CD8-positive, alpha-beta T cell (primary cell): ENCODE measurements at regions of chr17 and their contacts with region 1.

Region 1: DNA sequence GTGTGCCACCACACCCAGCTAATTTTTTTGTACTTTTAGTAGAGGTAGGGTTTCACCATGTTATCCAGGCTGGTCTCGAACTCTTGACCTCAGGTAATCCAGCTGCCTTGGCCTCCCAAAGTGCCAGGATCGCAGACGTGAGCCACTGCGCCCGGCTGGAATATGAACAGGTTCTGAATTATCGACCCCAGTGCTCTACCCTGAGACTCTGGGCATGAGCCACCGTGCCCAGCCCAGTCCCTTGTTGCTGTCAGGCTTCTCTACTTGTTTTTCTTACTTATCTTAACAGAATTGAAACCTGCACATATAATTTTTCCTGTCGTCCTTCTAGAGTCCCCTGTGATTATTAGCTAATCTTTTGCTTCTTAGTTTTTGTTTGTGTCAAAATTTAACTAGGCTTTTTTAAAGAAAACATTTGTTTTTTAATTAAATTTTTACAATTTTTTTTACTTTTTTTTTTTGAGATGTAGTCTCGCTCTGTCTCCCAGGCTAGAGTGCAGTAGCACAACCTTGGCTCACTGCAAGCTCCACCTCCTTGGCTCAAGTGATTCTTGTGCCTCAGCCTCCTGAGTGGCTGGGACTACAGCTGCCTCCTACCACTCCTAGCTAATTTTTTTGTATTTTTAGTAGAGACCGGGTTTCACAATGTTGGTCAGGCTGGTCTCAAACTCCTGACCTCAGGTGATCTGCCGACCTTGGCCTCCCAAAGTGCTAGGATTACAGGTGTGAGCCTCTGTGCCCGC is 66.7 kb downstream of the AP2B1 start:
- DNase-seq: no peak
- ATAC-seq: no peak
- H3K4me3 ChIP-seq: no peak overlapping the region
- H3K4me3 Mint-ChIP-seq: no peak overlapping the region
- H3K27ac ChIP-seq: no peak overlapping the region
- H3K27ac Mint-ChIP-seq: no peak overlapping the region
- H3K4me1 ChIP-seq: no peaks in the 10 kb centered on the region
- H3K4me1 Mint-ChIP-seq: peaks cover 2% of the 10 kb centered on the region
- H3K27me3 ChIP-seq: no peaks in the 10 kb centered on the region
- H3K27me3 Mint-ChIP-seq: no peaks in the 10 kb centered on the region
- CTCF ChIP-seq: no peak

Region 2: DNA sequence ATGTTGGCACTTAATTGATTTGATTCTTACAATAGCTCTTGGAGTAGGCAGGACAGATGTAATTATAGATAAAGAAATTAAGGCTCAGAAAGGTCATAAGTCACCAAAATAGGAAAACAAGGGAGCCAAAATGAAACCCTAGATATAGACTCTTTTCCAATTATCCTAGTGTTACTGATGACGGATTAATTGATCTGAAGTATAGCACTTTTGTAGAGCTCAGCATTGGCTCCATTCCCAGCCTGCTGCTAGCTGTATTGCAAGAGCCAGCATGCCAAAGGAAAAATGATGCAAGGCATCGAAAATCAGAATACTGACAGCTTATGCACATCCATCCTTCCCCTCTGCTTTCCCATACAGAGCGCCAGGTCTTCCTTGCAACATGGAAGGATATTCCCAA is 56.1 kb after region 1 on chr17:
- CTCF ChIA-PET with region 1: interaction called, 3 read pairs
- POLR2A ChIA-PET with region 1: no interaction called
- intact Hi-C with region 1: loop called in 1 of 2 experiments (anchors 10 kb)
- DNase-seq: no peak
- ATAC-seq: no peak
- H3K4me3 ChIP-seq: no peak overlapping the region
- H3K4me3 Mint-ChIP-seq: no peak overlapping the region
- H3K27ac ChIP-seq: no peak overlapping the region
- H3K27ac Mint-ChIP-seq: no peak overlapping the region
- H3K4me1 ChIP-seq: peaks cover 25% of the 10 kb centered on the region
- H3K4me1 Mint-ChIP-seq: peaks cover 41% of the 10 kb centered on the region
- H3K27me3 ChIP-seq: no peaks in the 10 kb centered on the region
- H3K27me3 Mint-ChIP-seq: no peaks in the 10 kb centered on the region
- CTCF ChIP-seq: no peak

Region 3: DNA sequence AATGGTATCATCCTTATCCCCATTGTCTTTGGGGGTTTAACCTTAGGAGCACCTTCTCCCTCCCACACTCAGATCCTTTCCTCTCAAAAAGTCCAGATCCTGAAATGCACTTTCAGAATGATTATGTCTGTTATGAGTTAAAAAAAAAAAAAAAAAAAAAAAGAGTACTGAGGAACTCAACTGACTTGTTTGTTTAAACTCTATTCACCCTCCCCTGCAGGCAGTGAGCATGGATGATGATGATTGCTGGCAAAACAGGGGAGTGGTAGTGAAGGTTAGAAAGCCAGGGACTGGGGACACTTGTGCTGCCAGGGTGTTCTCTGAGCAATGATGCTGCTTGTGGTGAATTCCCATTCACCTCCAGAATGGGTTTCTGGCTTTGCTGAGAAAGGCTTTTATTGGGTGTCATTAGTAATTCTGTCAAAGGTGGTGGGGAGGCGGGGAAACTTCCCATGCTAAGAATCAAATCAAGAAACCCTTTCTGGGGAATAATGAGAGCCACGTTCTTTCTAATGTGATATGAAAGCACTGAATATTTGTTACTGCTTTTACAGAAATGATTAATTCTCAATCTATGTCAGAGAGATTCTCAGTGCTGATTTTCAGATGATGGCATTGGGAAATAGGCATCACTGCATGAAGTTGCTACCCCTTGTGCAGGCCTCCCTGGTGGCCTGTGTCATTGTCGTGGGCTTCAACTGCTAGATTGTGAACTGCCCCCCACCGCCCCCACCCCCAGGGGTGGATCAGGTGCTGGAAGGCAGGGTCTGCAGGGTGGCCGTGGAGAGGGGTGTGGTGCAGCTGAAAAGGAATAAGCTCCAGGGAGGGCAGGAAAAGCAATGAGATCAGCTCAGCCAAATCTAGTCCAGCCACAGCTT is 464.0 kb after region 1 on chr17:
- CTCF ChIA-PET with region 1: no interaction called
- POLR2A ChIA-PET with region 1: no interaction called
- intact Hi-C with region 1: no loop called
- DNase-seq: no peak
- ATAC-seq: no peak
- H3K4me3 ChIP-seq: peak overlapping the region in 1 of 2 experiments; percentile 35
- H3K4me3 Mint-ChIP-seq: no peak overlapping the region
- H3K27ac ChIP-seq: no peak overlapping the region
- H3K27ac Mint-ChIP-seq: no peak overlapping the region
- H3K4me1 ChIP-seq: no peaks in the 10 kb centered on the region
- H3K4me1 Mint-ChIP-seq: no peaks in the 10 kb centered on the region
- H3K27me3 ChIP-seq: no peaks in the 10 kb centered on the region
- H3K27me3 Mint-ChIP-seq: peaks cover 6% of the 10 kb centered on the region
- CTCF ChIP-seq: no peak